AG04449 (cell line): ENCODE measurements at regions of chr19 and their contacts with region 1.

Region 1: GRCh38 chr19:40294560-40294959 is 9.4 kb upstream of the AKT2 start:
- DNase-seq: no peak
- H3K4me3 ChIP-seq: no peak overlapping the region
- CTCF ChIP-seq: no peak

Region 2: GRCh38 chr19:40312533-40312932 is 18.0 kb after region 1 on chr19:
- CTCF ChIA-PET with region 1: interaction called, 11 read pairs
- POLR2A ChIA-PET with region 1: no interaction called
- DNase-seq: no peak
- H3K4me3 ChIP-seq: no peak overlapping the region
- CTCF ChIP-seq: no peak

Region 3: GRCh38 chr19:40322871-40323615 is 28.5 kb after region 1 on chr19:
- CTCF ChIA-PET with region 1: no interaction called
- POLR2A ChIA-PET with region 1: no interaction called
- DNase-seq: no peak
- H3K4me3 ChIP-seq: no peak overlapping the region
- CTCF ChIP-seq: no peak